Mammary epithelial cell (primary cell): ENCODE measurements at regions of chr16 and their contacts with region 1.

Region 1: DNA sequence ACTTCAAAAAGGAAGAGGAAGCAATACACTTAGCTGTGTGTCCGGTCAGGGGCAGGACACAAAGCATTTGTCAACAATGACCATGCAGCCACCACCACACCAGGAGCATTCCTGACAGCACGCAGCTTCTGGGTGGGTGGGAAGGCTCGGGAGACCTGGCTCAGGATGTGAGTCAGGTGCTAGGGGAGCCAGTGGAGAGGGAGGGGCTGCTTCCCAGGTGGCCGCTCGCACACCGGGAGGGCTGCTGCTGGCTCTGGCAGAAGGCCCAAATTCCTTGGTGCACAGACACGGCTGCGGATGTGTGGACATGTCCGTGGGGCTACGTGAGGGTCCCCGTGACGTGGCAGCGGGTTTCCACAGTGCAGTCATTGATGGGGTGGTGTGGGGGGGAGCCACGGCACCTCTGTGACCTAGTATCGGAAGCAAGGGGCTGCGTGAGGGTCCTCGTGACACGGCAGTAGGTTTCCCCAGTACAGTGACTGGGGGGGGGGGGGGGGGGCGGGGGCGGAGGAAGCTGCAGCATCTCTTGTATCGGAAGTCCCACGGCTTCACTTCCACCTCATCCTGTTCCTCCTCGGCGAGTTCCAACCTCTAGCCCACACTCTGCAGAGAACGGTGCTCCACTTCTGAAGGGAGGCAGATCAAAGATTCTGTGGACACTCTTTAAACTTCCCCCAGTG is 112.8 kb downstream of the ZNF778 start:
- DNase-seq: peak; percentile 79
- H3K4me3 ChIP-seq: no peak overlapping the region
- H3K27ac ChIP-seq: peak overlapping the region; percentile 25
- H3K4me1 ChIP-seq: peaks cover 67% of the 10 kb centered on the region
- H3K27me3 ChIP-seq: no peaks in the 10 kb centered on the region
- CTCF ChIP-seq: no peak

Region 2: DNA sequence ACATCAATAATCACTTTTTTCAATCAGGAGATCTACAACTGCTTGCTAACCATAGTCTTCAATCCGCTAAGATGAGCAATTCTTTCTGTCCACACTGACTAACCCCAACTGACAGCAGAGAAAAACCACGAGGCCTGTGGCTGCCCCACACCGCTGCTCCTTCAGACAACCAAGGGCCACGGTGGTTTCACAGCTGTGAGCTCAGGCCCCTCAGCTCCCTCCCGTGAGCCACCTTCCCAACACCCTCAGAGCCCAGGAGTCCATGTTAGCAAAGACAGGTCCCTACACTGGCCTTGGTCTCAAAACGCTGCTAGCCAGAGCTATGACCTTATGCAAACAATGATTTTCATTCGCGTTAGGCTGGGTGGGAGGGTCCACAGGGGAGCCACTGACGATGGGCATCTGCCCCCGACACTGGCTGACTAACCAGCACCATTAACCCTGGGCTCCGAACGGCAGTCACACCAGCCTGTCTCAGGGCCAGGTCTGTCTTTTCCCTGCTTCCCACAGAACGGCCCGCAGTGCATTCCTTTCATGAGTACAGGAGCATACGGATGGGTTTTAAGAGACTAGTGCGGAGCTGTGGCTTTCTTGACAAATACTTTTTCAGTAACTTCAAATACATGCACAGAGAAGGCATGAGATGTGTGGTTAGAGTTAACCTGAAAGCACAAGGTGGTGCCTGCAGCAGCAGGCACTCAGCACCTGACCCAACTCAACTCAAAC is 92.8 kb after region 1 on chr16:
- CTCF ChIA-PET with region 1: no interaction called
- dilution Hi-C with region 1: loop called (anchors 5 kb)
- in situ Hi-C with region 1: no loop called
- intact Hi-C with region 1: no loop called
- DNase-seq: peak; percentile 63
- H3K4me3 ChIP-seq: no peak overlapping the region
- H3K27ac ChIP-seq: peak overlapping the region; percentile 14
- H3K4me1 ChIP-seq: peaks cover 19% of the 10 kb centered on the region
- H3K27me3 ChIP-seq: no peaks in the 10 kb centered on the region
- CTCF ChIP-seq: no peak

Region 3: DNA sequence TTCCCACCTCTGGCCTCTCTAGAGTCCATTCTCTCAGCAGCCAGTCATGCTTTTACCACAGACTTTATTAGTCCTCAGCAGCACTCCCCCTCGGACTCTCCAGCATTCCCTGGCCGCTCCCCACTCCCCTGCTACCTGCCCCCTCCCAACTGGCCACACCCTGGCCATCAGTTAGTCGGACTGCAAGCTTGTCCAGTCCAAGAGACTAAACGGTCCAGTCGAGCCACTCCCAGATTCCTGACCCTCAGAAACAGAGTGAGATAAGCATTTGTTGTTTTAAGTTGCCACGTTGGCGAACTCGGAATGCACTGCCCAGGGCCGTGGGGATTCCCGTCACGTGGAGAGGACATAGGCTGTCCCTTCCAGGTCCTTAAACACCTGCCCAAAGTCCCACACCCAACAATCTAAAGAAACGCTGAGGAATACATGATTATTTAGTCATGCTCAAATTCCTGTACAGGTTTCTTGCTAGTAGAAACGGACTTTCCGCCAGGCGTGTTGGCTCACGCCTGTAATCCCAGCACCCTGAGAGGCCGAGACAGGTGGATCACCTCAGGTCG is 172.1 kb after region 1 on chr16:
- CTCF ChIA-PET with region 1: no interaction called
- dilution Hi-C with region 1: no loop called
- in situ Hi-C with region 1: no loop called
- intact Hi-C with region 1: loop called (anchors 1 kb)
- DNase-seq: peak; percentile 95
- H3K4me3 ChIP-seq: no peak overlapping the region
- H3K27ac ChIP-seq: peak overlapping the region; percentile 42
- H3K4me1 ChIP-seq: peaks cover 28% of the 10 kb centered on the region
- H3K27me3 ChIP-seq: no peaks in the 10 kb centered on the region
- CTCF ChIP-seq: no peak

Region 4: GRCh38 chr16:89560378-89561141 is 230.2 kb after region 1 on chr16 and contains the start of gene RPL13:
- CTCF ChIA-PET with region 1: no interaction called
- dilution Hi-C with region 1: no loop called
- in situ Hi-C with region 1: no loop called
- intact Hi-C with region 1: loop called (anchors 5 kb)
- DNase-seq: peak; percentile 95
- H3K4me3 ChIP-seq: peak within 1 kb of the TSS; percentile 64 to 81 (median 78)
- H3K27ac ChIP-seq: peak within 1 kb of the TSS; percentile 88
- H3K4me1 ChIP-seq: peaks cover 43% of the 10 kb centered on the region
- H3K27me3 ChIP-seq: no peaks in the 10 kb centered on the region
- CTCF ChIP-seq: no peak
- total RNA-seq, gene RPL13: 1,876 to 2,450 TPM